SK-N-SH (cell line): ENCODE measurements at regions of chr7 and their contacts with region 1.

Region 1: GRCh38 chr7:30548762-30549344 is 44.2 kb upstream of the GGCT start:
- DNase-seq: peak; percentile 77
- H3K4me3 ChIP-seq: peak overlapping the region in 1 of 2 experiments; percentile 1; a peak in 1 of 4 replicates
- H3K27ac ChIP-seq: peak overlapping the region in 1 of 2 experiments; percentile 35; a peak in 1 of 4 replicates
- H3K4me1 ChIP-seq: peaks cover 5 to 18% of the 10 kb centered on the region in 2 experiments; a peak in 3 of 4 replicates
- H3K27me3 ChIP-seq: no peaks in the 10 kb centered on the region
- CTCF ChIP-seq: peak; percentile 96
- EP300 ChIP-seq: no peak
- RAD21 ChIP-seq: peak; percentile 79

Region 2: DNA sequence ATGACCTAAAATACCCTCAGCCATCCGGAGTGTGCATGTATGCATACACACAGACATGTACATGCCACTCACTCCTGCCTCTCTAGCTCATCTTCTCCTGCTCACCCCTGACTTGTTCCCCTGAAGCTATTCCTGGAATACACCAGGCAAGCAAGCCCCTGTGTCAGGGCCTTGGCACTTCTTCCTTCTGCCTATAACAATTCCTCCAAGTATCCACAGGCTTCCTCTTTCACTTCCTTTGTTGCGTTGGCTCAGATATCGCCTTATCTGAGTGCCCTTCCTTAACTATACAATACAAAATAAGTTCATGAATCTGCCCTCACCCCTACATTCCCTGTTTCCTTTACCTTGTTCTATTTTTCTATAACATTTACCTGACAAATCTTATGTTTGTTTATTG is 159.1 kb before region 1 on chr7:
- CTCF ChIA-PET with region 1: no interaction called
- POLR2A ChIA-PET with region 1: no interaction called
- DNase-seq: no peak
- H3K4me3 ChIP-seq: no peak overlapping the region
- H3K27ac ChIP-seq: no peak overlapping the region
- H3K4me1 ChIP-seq: no peaks in the 10 kb centered on the region
- H3K27me3 ChIP-seq: no peaks in the 10 kb centered on the region
- CTCF ChIP-seq: no peak
- EP300 ChIP-seq: no peak
- RAD21 ChIP-seq: no peak

Region 3: DNA sequence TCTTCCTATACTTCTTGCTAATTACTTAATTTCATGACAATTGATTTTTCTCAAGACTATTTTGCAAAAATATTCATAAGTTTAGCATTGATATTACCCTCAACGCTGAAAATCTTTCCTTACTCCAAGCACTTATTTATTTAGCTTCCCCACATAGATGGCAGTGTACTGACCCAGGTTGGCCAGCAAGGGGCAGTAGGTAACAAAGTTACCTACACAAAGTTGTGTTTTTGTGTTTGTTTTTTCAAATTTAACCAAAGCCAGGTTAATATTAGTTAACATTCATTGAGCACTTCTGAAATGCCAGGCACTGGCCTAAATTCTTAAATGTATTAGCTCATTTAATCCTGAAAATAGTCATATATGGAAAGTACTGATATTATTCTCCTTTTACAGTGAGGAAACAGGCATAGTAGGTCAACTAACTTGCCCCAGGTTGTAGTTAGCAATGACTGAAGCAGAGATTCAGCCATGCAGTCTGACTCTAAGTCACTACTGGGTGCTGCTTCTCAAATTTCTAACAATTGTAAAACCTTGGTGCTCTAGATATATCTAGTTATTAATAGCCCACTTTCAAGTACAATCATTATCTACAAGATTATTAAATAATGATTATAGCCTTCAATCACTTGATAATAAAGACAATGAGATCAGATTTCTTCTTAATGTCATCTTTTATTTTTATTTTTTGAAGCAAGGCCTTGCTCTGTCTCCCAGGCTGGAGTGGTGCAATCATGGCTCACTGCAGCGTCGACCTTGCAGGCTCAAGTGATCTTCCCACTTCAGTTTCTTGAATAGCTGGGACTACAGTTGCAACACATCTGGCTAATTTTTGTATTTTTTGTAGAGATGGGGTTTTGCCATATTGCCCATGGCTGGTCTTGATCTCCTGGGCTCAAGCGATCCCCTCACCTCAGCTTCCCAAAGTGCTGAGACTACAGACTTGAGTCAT is 38.5 kb before region 1 on chr7:
- CTCF ChIA-PET with region 1: interaction called, 27 read pairs
- POLR2A ChIA-PET with region 1: interaction called, 3 read pairs
- DNase-seq: peak; percentile 52
- H3K4me3 ChIP-seq: no peak overlapping the region
- H3K27ac ChIP-seq: 0 out of 4 replicates have a peak overlapping the region, but pooled peaks of 1 of the 2 experiments have one; percentile 67
- H3K4me1 ChIP-seq: peaks cover 0 to 10% of the 10 kb centered on the region in 2 experiments; a peak in 2 of 4 replicates
- H3K27me3 ChIP-seq: no peaks in the 10 kb centered on the region
- CTCF ChIP-seq: peak; percentile 96
- EP300 ChIP-seq: no peak
- RAD21 ChIP-seq: peak; percentile 72

Region 4: DNA sequence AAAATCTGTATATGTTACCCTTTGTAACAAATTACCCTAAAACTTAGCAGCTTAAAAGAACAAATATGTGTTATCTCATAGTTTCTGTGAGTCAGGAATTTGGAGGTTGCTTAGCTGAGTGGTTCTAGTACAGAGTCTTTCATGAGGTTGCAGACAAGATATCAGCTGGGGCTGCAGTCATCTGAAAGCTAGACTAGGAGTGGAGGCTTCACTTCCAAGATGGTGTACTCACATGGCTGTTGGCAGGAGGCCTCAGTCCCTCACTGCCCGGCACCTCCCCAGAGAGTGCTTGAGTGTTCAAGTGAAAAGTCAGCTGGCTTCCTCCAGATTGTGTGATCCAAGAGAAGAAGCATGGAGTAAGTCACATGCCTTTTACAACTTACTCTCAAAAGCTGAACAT is 27.3 kb before region 1 on chr7:
- CTCF ChIA-PET with region 1: interaction called, 28 read pairs
- POLR2A ChIA-PET with region 1: interaction called, 3 read pairs
- DNase-seq: no peak
- H3K4me3 ChIP-seq: no peak overlapping the region
- H3K27ac ChIP-seq: no peak overlapping the region
- H3K4me1 ChIP-seq: no peaks in the 10 kb centered on the region; a peak in 1 of 4 replicates
- H3K27me3 ChIP-seq: no peaks in the 10 kb centered on the region
- CTCF ChIP-seq: no peak
- EP300 ChIP-seq: no peak
- RAD21 ChIP-seq: no peak

Region 5: DNA sequence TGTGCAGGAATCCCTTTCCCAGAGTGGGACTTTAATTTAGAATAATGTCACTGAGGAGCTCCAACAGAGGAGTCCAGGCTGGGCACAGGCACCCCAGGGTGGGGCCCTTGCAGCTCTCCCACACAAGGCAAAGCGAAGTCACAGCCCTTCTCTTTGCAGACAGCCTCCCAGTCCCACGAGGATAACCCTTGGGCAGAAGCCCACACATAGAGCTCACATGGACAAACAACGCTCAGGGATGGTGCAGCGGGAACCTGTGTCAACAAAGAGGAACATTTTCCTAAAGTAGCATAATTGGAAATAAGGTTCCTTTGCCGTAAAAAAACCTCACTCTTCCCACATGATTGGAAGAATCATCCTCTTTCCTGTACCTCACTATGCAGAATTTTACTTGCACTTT is 15.0 kb before region 1 on chr7:
- CTCF ChIA-PET with region 1: interaction called, 11 read pairs
- POLR2A ChIA-PET with region 1: no interaction called
- DNase-seq: no peak
- H3K4me3 ChIP-seq: no peak overlapping the region
- H3K27ac ChIP-seq: no peak overlapping the region
- H3K4me1 ChIP-seq: no peaks in the 10 kb centered on the region
- H3K27me3 ChIP-seq: no peaks in the 10 kb centered on the region
- CTCF ChIP-seq: no peak
- EP300 ChIP-seq: no peak
- RAD21 ChIP-seq: no peak

Region 6: GRCh38 chr7:30572212-30572841 is 23.5 kb after region 1 on chr7:
- CTCF ChIA-PET with region 1: interaction called, 294 read pairs
- POLR2A ChIA-PET with region 1: no interaction called
- DNase-seq: no peak
- H3K4me3 ChIP-seq: no peak overlapping the region
- H3K27ac ChIP-seq: no peak overlapping the region
- H3K4me1 ChIP-seq: no peaks in the 10 kb centered on the region
- H3K27me3 ChIP-seq: no peaks in the 10 kb centered on the region
- CTCF ChIP-seq: no peak
- EP300 ChIP-seq: no peak
- RAD21 ChIP-seq: no peak